CD14-positive monocyte (primary cell): ENCODE measurements at regions of chr3 and their contacts with region 1.

Region 1: GRCh38 chr3:141011232-141011996 is 39.7 kb upstream of the SPSB4 start:
- DNase-seq: peak; percentile 16 to 46 (median 42)
- H3K4me3 ChIP-seq: no peak overlapping the region
- H3K4me3 Mint-ChIP-seq: no peak overlapping the region
- H3K27ac ChIP-seq: no peak overlapping the region
- H3K27ac Mint-ChIP-seq: peak overlapping the region in 1 of 7 donors; percentile 41
- H3K4me1 ChIP-seq: peaks cover 5 to 6% of the 10 kb centered on the region in 2 donors
- H3K4me1 Mint-ChIP-seq: peaks cover 10% of the 10 kb centered on the region
- H3K27me3 ChIP-seq: no peaks in the 10 kb centered on the region
- H3K27me3 Mint-ChIP-seq: peaks cover 2 to 6% (median 3%) of the 10 kb centered on the region in 3 donors
- CTCF ChIP-seq: peak; percentile 80

Region 2: GRCh38 chr3:141192345-141192744 is 180.9 kb after region 1 on chr3:
- intact Hi-C with region 1: loop called in 1 of 2 experiments (anchors 5 kb)
- DNase-seq: peak; percentile 81 to 84 (median 83)
- H3K4me3 ChIP-seq: no peak overlapping the region
- H3K4me3 Mint-ChIP-seq: no peak overlapping the region
- H3K27ac ChIP-seq: no peak overlapping the region
- H3K27ac Mint-ChIP-seq: no peak overlapping the region
- H3K4me1 ChIP-seq: peaks cover 0 to 6% of the 10 kb centered on the region in 2 donors
- H3K4me1 Mint-ChIP-seq: peaks cover 10% of the 10 kb centered on the region
- H3K27me3 ChIP-seq: no peaks in the 10 kb centered on the region
- H3K27me3 Mint-ChIP-seq: peaks cover 5 to 17% (median 17%) of the 10 kb centered on the region in 3 donors
- CTCF ChIP-seq: peak; percentile 98